Mammary epithelial cell (primary cell): ENCODE measurements at regions of chr16 and their contacts with region 1.

Region 1: DNA sequence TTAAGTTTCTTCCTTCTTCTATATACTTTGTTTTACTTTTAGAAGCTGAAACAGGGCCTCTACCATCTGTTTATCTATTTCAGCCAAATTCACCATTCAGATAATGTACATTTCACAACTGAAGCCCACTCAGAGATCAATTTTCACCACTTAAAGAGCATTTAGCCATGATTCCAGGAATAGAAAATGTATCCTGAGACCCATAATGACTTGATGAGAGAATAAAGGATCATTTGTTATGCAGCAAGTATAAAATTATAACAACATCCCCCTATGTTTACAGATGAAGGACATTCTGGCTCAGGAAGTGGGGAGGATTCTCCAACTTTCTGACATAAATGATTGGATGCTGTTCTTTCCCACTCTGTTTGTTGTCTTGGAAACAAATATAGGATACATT is 962.1 kb upstream of the EEF2KMT start:
- DNase-seq: no peak
- H3K4me3 ChIP-seq: no peak overlapping the region
- H3K27ac ChIP-seq: no peak overlapping the region
- H3K4me1 ChIP-seq: no peaks in the 10 kb centered on the region
- H3K27me3 ChIP-seq: no peaks in the 10 kb centered on the region
- CTCF ChIP-seq: no peak

Region 2: GRCh38 chr16:5993356-5993755 is 66.3 kb before region 1 on chr16:
- CTCF ChIA-PET with region 1: no interaction called
- dilution Hi-C with region 1: no loop called
- in situ Hi-C with region 1: loop called in 1 of 2 experiments (anchors 10 kb)
- intact Hi-C with region 1: no loop called
- DNase-seq: no peak
- H3K4me3 ChIP-seq: no peak overlapping the region
- H3K27ac ChIP-seq: no peak overlapping the region
- H3K4me1 ChIP-seq: no peaks in the 10 kb centered on the region
- H3K27me3 ChIP-seq: no peaks in the 10 kb centered on the region
- CTCF ChIP-seq: no peak

Region 3: GRCh38 chr16:6105115-6105514 is 45.4 kb after region 1 on chr16:
- CTCF ChIA-PET with region 1: no interaction called
- dilution Hi-C with region 1: loop called (anchors 5 kb)
- in situ Hi-C with region 1: no loop called
- intact Hi-C with region 1: no loop called
- DNase-seq: no peak
- H3K4me3 ChIP-seq: no peak overlapping the region
- H3K27ac ChIP-seq: no peak overlapping the region
- H3K4me1 ChIP-seq: no peaks in the 10 kb centered on the region
- H3K27me3 ChIP-seq: no peaks in the 10 kb centered on the region
- CTCF ChIP-seq: peak in 1 of 2 donors; percentile 15